Right lobe of liver (tissue), 6 donors: ENCODE measurements at regions of chr14 and their contacts with region 1.

Region 1: DNA sequence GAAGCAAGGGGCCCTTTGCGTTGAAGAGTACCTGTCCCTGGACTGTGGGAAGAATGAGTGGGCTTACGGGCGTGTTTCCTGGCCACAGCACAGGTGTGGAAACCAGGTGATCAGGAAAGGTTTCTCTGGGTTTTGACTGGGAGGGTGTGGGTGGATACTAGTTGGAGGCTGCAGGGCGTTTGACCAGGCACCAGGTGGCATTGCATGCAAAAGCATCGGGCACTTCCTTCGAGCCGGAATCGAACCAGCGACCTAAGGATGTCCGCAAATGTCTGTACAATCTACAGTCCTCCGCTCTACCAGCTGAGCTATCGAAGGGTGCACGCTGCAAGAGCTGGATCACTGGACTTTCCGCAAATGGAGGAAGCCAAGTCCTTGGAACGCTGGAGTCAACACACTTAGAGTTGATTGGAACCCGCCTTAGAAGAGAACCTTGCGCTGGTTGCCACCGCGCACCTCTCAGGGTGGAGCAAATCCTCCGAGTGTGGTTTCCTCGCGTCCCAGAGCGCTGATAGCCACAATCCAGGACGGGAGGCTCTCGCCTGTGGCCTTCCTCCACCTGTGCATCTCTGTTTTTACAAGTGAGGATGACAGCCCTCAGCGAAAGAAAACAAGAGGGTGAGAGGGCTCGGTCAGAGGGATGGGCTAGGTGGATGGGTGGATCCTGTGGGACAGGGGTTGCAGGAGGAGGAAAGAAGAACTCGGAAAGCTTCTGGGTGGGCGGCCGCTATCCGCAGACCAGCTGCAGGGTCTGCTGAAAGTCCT is 21.2 kb upstream of the RNASE4 start:
- DNase-seq: peak; percentile 67 to 76 (median 75)
- ATAC-seq: peak; percentile 91 to 98 (median 96)
- H3K4me3 ChIP-seq: peak overlapping the region in 2 of 3 donors; percentile 12 to 22
- H3K27ac ChIP-seq: no peak overlapping the region
- H3K4me1 ChIP-seq: peaks cover 0 to 6% (median 3%) of the 10 kb centered on the region in 4 donors
- H3K27me3 ChIP-seq: no peaks in the 10 kb centered on the region
- CTCF ChIP-seq: peak; percentile 66 to 79 (median 73)
- POLR2A ChIP-seq: no peak

Region 2: GRCh38 chr14:20855652-20856291 is 192.6 kb after region 1 on chr14:
- intact Hi-C with region 1: loop called in 1 of 2 experiments (anchors 10 kb)
- DNase-seq: peak in 2 of 3 donors; percentile 34 to 65
- ATAC-seq: peak; percentile 95 to 99 (median 98)
- H3K4me3 ChIP-seq: no peak overlapping the region
- H3K27ac ChIP-seq: no peak overlapping the region
- H3K4me1 ChIP-seq: no peaks in the 10 kb centered on the region
- H3K27me3 ChIP-seq: no peaks in the 10 kb centered on the region
- CTCF ChIP-seq: peak; percentile 76 to 85 (median 78)
- POLR2A ChIP-seq: no peak